Panc1 (cell line): ENCODE measurements at regions of chr10 and their contacts with region 1.

Region 1: GRCh38 chr10:102384053-102384452 is 11.5 kb upstream of the NFKB2 start:
- DNase-seq: no peak
- ATAC-seq: no peak
- H3K4me3 ChIP-seq: no peak overlapping the region
- H3K27ac ChIP-seq: no peak overlapping the region
- H3K4me1 ChIP-seq: no peaks in the 10 kb centered on the region
- H3K27me3 ChIP-seq: no peaks in the 10 kb centered on the region
- CTCF ChIP-seq: no peak; the same call in 1 of the 2 replicates

Region 2: GRCh38 chr10:102262744-102263370 is 121.2 kb before region 1 on chr10:
- CTCF ChIA-PET with region 1: interaction called, 10 read pairs
- POLR2A ChIA-PET with region 1: no interaction called
- in situ Hi-C with region 1: no loop called
- intact Hi-C with region 1: no loop called
- DNase-seq: no peak
- ATAC-seq: no peak
- H3K4me3 ChIP-seq: no peak overlapping the region
- H3K27ac ChIP-seq: no peak overlapping the region
- H3K4me1 ChIP-seq: no peaks in the 10 kb centered on the region
- H3K27me3 ChIP-seq: no peaks in the 10 kb centered on the region
- CTCF ChIP-seq: no peak

Region 3: DNA sequence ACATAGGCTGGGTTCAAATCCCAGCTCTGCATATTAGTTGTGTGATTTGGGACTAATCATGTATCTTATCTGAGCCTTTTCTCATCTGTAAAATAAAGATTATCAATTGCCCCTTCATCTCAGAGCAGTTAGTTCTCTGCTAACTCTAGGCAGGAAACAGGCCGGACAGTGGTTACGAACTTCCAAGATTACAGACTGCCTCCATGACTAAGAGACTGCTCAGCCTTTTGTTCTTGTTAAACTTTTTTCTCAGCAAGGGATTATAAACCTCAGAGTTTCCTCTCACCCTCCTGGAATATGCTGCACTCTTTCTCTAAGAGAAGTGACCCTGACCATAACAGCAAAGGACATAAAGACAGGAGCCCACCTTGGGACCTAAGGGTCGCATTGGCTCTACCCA is 41.1 kb before region 1 on chr10:
- CTCF ChIA-PET with region 1: no interaction called
- POLR2A ChIA-PET with region 1: no interaction called
- in situ Hi-C with region 1: no loop called
- intact Hi-C with region 1: no loop called
- DNase-seq: no peak
- ATAC-seq: no peak
- H3K4me3 ChIP-seq: no peak overlapping the region
- H3K27ac ChIP-seq: no peak overlapping the region
- H3K4me1 ChIP-seq: no peaks in the 10 kb centered on the region
- H3K27me3 ChIP-seq: no peaks in the 10 kb centered on the region
- CTCF ChIP-seq: no peak

Region 4: GRCh38 chr10:102399217-102400089 is 15.4 kb after region 1 on chr10:
- CTCF ChIA-PET with region 1: interaction called, 10 read pairs
- POLR2A ChIA-PET with region 1: no interaction called
- in situ Hi-C with region 1: no loop called
- intact Hi-C with region 1: no loop called
- DNase-seq: no peak
- ATAC-seq: peak; percentile 65
- H3K4me3 ChIP-seq: peak overlapping the region; percentile 41 to 42
- H3K27ac ChIP-seq: peak overlapping the region; percentile 72
- H3K4me1 ChIP-seq: peaks cover 45% of the 10 kb centered on the region
- H3K27me3 ChIP-seq: no peaks in the 10 kb centered on the region
- CTCF ChIP-seq: peak; percentile 100

Region 5: DNA sequence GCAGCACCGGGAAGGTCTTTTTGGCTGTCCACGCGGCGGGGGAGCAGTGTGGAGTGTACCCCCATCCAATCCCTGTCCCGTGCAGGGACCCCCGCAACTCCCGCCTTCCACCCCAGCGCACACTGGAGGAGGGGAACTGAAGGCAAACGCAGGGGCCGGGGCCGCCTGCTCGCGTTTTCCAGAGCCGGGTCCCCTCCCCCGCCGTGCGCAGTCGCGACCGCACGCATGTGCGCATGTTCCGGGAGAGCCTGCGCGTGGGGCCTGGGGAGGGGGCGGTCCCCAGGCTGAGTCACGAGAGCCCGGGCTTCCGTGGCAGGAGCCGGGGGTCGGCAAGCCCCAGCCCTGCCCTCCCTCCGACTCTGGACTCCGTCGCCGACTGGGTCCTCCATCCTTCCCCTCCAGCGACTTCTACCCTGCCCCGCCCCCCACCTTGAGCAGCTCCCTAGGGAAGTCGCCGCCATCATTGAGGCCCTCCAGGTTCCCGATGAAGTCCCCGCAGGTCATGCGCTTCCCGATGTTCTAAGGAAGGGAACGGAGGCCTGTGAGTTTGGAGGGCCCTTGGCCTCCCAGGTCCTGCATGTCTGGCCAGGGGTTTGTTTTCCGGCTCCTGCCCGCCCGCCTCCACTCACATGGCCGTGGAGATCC is 26.5 kb after region 1 on chr10:
- CTCF ChIA-PET with region 1: interaction called, 9 read pairs
- POLR2A ChIA-PET with region 1: interaction called, 12 read pairs
- in situ Hi-C with region 1: no loop called
- intact Hi-C with region 1: no loop called
- DNase-seq: no peak
- ATAC-seq: 0 out of 2 replicates have a peak, but pooled peaks have one; percentile 11
- H3K4me3 ChIP-seq: peak overlapping the region; percentile 33 to 51
- H3K27ac ChIP-seq: peak overlapping the region; percentile 10; the same call in 1 of the 2 replicates
- H3K4me1 ChIP-seq: peaks cover 8% of the 10 kb centered on the region
- H3K27me3 ChIP-seq: 0 out of 2 replicates have a peak, but pooled peaks cover 2% of the 10 kb centered on the region
- CTCF ChIP-seq: no peak

Region 6: GRCh38 chr10:102432162-102432950 is 48.3 kb after region 1 on chr10 and contains the start of gene CUEDC2:
- CTCF ChIA-PET with region 1: no interaction called
- POLR2A ChIA-PET with region 1: interaction called, 18 read pairs
- in situ Hi-C with region 1: no loop called
- intact Hi-C with region 1: no loop called
- DNase-seq: peak; percentile 80
- ATAC-seq: peak; percentile 96
- H3K4me3 ChIP-seq: peak within 1 kb of the TSS; percentile 88 to 98
- H3K27ac ChIP-seq: peak within 1 kb of the TSS; percentile 97
- H3K4me1 ChIP-seq: peaks cover 14% of the 10 kb centered on the region
- H3K27me3 ChIP-seq: no peaks in the 10 kb centered on the region
- CTCF ChIP-seq: no peak
- total RNA-seq, gene CUEDC2: 79.3 TPM